ENCODE measurements at regions of chr4 and their contacts with region 1.

Region 1: GRCh38 chr4:76074468-76074867 is at the start of gene ART3:
- DNase-seq: peak in 1 of 2 donors; percentile 58
- ATAC-seq: peak; percentile 67 to 96 (median 93)
- H3K4me3 ChIP-seq: peak within 1 kb of the TSS in 8 of 10 donors; percentile 5 to 44 (median 14)
- H3K27ac ChIP-seq: peak within 1 kb of the TSS; percentile 19 to 74 (median 49)
- H3K4me1 ChIP-seq: peaks cover 0 to 20% (median 0%) of the 10 kb centered on the region in 9 donors
- H3K27me3 ChIP-seq: no peaks in the 10 kb centered on the region
- CTCF ChIP-seq: no peak
- total RNA-seq, gene ART3: 38.4 to 250 (median 65.4) TPM

Region 2: DNA sequence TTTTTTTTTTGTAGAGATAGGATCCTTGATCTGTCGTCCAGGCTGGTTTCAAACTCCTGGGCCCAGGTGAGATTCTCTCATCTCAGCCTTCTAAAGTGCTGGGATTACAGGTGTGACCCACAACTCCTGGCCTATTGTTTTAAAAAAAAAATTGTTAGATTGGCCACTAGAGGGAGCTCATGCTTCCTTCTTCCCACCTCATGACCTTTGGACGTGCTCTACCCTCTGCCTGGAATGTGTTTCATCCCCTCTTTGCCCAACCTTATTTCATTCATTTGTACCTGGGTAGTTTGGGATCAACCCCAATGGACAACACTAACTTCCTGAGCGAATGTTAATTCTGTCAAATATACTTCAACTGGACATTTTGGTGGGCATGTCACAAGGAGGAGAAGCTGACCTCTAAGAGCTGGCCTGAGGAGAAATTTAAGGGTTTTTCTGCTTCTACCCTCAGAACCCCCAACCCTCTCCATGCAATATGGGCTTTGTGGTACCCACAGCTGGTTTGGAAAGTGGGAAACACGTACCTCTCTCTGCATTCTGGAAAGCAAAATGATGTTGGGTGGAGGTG is 178.6 kb before region 1 on chr4:
- intact Hi-C with region 1: loop called in 1 of 10 experiments (anchors 10 kb)
- DNase-seq: no peak
- ATAC-seq: peak in 4 of 8 donors; percentile 31 to 61 (median 54)
- H3K4me3 ChIP-seq: no peak overlapping the region
- H3K27ac ChIP-seq: no peak overlapping the region
- H3K4me1 ChIP-seq: no peaks in the 10 kb centered on the region
- H3K27me3 ChIP-seq: peaks cover 0 to 10% (median 0%) of the 10 kb centered on the region in 7 donors
- CTCF ChIP-seq: peak; percentile 16 to 68 (median 60)

Region 3: GRCh38 chr4:75916091-75916661 is 158.3 kb before region 1 on chr4:
- intact Hi-C with region 1: loop called in 4 of 10 experiments (anchors 5 to 10 kb)
- DNase-seq: no peak
- ATAC-seq: peak in 6 of 8 donors; percentile 38 to 67 (median 52)
- H3K4me3 ChIP-seq: no peak overlapping the region
- H3K27ac ChIP-seq: peak overlapping the region in 3 of 10 donors; percentile 5 to 36 (median 17)
- H3K4me1 ChIP-seq: peaks cover 0 to 13% (median 0%) of the 10 kb centered on the region in 9 donors
- H3K27me3 ChIP-seq: no peaks in the 10 kb centered on the region
- CTCF ChIP-seq: peak; percentile 26 to 84 (median 69)

Region 4: GRCh38 chr4:76028350-76028765 is 46.1 kb before region 1 on chr4:
- intact Hi-C with region 1: no loop called
- DNase-seq: no peak
- ATAC-seq: peak in 3 of 8 donors; percentile 19 to 48 (median 47)
- H3K4me3 ChIP-seq: peak overlapping the region in 8 of 10 donors; percentile 4 to 44 (median 29)
- H3K27ac ChIP-seq: peak overlapping the region in 4 of 10 donors; percentile 14 to 62 (median 22)
- H3K4me1 ChIP-seq: peaks cover 0 to 30% (median 0%) of the 10 kb centered on the region in 9 donors
- H3K27me3 ChIP-seq: no peaks in the 10 kb centered on the region
- CTCF ChIP-seq: no peak

Region 5: GRCh38 chr4:76447393-76447851 is 373.0 kb after region 1 on chr4:
- intact Hi-C with region 1: no loop called
- DNase-seq: no peak
- ATAC-seq: no peak
- H3K4me3 ChIP-seq: no peak overlapping the region
- H3K27ac ChIP-seq: no peak overlapping the region
- H3K4me1 ChIP-seq: peaks cover 0 to 14% (median 5%) of the 10 kb centered on the region in 9 donors
- H3K27me3 ChIP-seq: no peaks in the 10 kb centered on the region
- CTCF ChIP-seq: no peak

Measured in heart right ventricle (tissue), 16 donors.